Gastrocnemius medialis (tissue), 4 donors: ENCODE measurements at regions of chr7 and their contacts with region 1.

Region 1: DNA sequence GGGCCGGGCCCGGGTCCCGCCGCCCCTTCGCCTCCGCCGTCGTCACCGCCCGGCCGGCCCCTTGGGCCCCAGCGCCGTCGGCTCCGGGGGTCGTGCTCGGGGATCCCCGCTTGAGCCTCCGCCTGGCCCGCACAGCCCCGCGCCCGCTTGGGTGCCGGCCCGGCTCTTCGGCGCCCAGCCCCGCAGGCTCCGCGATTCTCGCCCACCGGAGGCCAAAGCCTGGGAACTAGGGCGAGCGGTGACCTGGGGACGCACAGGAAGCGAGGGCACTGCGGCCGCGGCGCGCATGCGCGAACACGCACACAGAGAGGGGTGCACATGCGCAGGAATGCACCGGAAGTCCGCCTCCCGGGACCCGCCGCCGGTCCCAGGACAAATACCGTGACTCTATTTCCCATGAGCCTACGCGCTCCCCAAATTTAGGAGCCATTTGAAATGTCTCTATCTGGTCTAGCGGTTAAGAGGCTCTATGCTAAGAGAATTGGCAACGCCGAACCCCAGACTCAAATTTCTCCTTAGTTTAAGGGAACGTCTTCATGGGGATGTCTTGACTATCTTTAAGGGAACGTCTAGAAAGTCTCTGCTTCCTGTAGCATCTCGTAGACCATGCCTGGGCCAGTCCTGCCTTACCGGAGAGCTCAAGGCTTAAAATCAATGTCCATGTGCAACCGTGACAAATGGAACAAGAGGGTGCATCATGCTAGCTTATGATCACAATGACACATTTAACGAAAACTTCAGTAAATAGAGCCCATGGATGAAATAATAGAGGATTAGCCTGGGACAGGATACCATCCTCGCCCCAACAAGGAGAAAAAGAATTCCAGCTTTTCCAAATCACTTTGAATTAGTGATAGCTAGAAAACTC is at the start of gene ZNF12:
- DNase-seq: peak; percentile 93 to 96
- ATAC-seq: peak; percentile 98
- H3K4me3 ChIP-seq: peak within 1 kb of the TSS; percentile 75 to 99 (median 88)
- H3K27ac ChIP-seq: peak within 1 kb of the TSS; percentile 80 to 90 (median 84)
- H3K4me1 ChIP-seq: peaks cover 22 to 23% of the 10 kb centered on the region in 2 donors
- H3K27me3 ChIP-seq: no peaks in the 10 kb centered on the region
- CTCF ChIP-seq: peak in 1 of 5 experiments; percentile 10
- POLR2A ChIP-seq: peak; percentile 63 to 81
- total RNA-seq, gene ZNF12: 4.5 to 8.9 (median 5.3) TPM

Region 2: GRCh38 chr7:6530626-6531491 is 176.1 kb before region 1 on chr7:
- in situ Hi-C with region 1: no loop called
- intact Hi-C with region 1: no loop called
- DNase-seq: no peak
- ATAC-seq: no peak
- H3K4me3 ChIP-seq: peak overlapping the region; percentile 28 to 49 (median 38)
- H3K27ac ChIP-seq: no peak overlapping the region
- H3K4me1 ChIP-seq: peaks cover 0 to 11% of the 10 kb centered on the region in 2 donors
- H3K27me3 ChIP-seq: peaks cover 32 to 57% (median 54%) of the 10 kb centered on the region in 3 donors
- CTCF ChIP-seq: no peak
- POLR2A ChIP-seq: no peak

Region 3: GRCh38 chr7:6577365-6578113 is 129.4 kb before region 1 on chr7 and contains the start of gene ZDHHC4:
- in situ Hi-C with region 1: no loop called
- intact Hi-C with region 1: loop called (anchors 10 kb)
- DNase-seq: peak; percentile 69 to 84
- ATAC-seq: peak; percentile 94 to 97
- H3K4me3 ChIP-seq: peak within 1 kb of the TSS; percentile 70 to 88 (median 77)
- H3K27ac ChIP-seq: peak within 1 kb of the TSS; percentile 85 to 95 (median 92)
- H3K4me1 ChIP-seq: peaks cover 0 to 5% of the 10 kb centered on the region in 2 donors
- H3K27me3 ChIP-seq: no peaks in the 10 kb centered on the region
- CTCF ChIP-seq: no peak
- POLR2A ChIP-seq: peak; percentile 87 to 92
- total RNA-seq, gene ZDHHC4: 52.7 to 88.6 (median 70.5) TPM

Region 4: DNA sequence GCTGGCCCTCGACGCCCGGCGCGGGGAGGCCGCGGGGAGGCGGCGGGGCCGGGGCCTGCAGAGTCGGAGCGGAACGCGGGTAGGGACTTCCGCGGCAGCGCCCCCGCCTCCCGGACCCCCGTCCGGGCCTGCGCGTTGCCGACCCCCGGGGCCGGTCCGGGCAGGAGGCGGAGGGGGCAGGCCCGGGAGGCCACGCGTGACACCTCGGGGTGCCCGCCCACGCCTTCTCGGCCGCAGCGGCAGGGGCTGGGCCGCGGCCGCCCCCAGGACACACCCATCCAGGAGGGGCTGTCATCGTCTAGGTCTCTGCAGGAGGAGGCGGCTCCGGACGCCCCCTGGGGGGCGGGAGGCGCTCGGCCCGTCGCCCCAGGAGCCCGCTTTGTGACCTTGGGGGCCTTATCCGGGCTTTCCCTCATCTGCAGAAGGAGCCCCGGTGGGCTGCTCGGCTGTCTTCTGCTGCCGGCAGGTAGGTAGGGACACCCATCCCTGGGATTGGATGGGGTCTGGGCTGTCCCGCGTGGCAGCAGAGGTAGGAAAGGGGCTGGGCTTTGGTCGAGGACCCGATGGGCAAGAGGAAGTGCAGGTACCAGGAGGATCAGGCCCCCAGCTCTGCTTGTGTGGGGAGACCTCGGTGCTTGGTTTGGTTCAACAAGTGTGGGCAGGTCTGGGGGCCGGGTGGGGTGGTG is 69.2 kb before region 1 on chr7:
- in situ Hi-C with region 1: no loop called
- intact Hi-C with region 1: loop called (anchors 2 kb)
- DNase-seq: no peak
- ATAC-seq: peak; percentile 12 to 21
- H3K4me3 ChIP-seq: peak overlapping the region; percentile 56 to 79 (median 62)
- H3K27ac ChIP-seq: peak overlapping the region; percentile 44 to 72 (median 58)
- H3K4me1 ChIP-seq: peaks cover 8 to 20% of the 10 kb centered on the region in 2 donors
- H3K27me3 ChIP-seq: no peaks in the 10 kb centered on the region
- CTCF ChIP-seq: no peak
- POLR2A ChIP-seq: no peak

Region 5: DNA sequence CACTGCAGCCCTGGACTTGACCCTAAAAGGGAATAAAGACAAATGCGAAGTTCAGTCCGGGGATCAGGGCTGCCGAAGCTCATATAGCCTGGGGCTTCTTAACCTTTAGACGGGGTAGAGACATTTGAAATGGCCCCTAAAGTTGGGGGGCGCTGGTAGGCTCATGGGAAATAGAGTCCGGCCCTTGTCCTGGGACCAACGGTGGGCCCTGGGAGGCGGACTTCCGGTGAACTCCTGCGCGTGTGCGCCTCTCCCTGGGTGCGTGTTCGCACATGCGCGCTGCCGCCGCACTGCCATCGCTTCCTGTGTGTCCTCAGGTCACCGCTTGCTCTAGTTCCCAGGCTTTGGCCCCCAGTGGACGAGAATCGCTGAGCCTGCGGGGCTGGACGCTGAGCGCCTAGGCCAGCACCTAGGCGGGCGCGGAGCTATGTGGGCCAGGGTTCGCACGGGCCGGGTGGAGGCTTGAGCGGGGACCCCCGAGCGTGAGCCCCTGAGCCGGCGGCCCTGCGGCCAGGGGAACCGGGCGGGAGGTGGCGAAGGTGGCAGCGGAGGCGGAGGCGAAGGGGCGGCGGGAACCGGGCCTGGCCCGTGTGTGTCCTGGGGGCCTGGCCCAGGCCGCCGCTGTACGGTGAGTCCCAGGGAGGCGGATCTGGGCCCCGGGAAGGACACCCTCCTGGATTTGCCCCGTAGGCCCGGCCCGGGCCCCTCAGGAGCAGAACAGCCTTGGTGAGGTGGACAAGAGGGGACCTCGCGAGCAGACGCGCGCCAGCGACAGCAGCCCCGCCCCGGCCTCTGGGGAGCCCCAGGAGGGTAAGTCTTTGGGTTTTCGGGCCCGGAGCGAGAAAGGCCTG is 22.8 kb after region 1 on chr7:
- in situ Hi-C with region 1: no loop called
- intact Hi-C with region 1: loop called (anchors 1 kb)
- DNase-seq: peak; percentile 75 to 92
- ATAC-seq: peak; percentile 99
- H3K4me3 ChIP-seq: peak overlapping the region; percentile 76 to 97 (median 86)
- H3K27ac ChIP-seq: peak overlapping the region; percentile 73 to 88 (median 87)
- H3K4me1 ChIP-seq: peaks cover 9 to 10% of the 10 kb centered on the region in 2 donors
- H3K27me3 ChIP-seq: no peaks in the 10 kb centered on the region
- CTCF ChIP-seq: peak in 1 of 5 experiments; percentile 22
- POLR2A ChIP-seq: peak; percentile 35 to 36

Region 6: DNA sequence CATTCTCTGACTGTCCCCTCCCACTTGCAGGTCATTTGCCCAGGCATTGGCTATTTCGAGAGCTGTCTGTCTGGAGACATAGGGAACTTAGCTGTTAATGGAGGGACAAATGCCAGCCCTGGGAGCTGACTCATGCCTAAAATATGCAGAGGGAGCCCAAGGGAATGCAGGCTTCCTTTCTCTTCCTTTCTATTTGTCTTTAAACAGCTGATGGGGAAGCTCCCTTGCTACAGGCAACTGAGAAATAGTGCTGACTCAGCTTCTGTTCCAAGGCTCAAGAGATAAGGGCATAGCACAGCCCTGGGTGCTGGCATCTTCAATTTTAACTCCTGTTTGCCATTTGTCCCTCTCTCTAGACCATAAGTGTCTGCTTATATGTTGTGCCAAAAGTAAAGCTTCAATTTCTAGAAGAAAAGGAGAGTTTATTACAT is 392.7 kb after region 1 on chr7:
- in situ Hi-C with region 1: no loop called
- intact Hi-C with region 1: no loop called
- DNase-seq: peak; percentile 39 to 64
- ATAC-seq: peak in 1 of 2 donors; percentile 77
- H3K4me3 ChIP-seq: no peak overlapping the region
- H3K27ac ChIP-seq: no peak overlapping the region
- H3K4me1 ChIP-seq: peaks cover 0 to 6% of the 10 kb centered on the region in 2 donors
- H3K27me3 ChIP-seq: no peaks in the 10 kb centered on the region
- CTCF ChIP-seq: no peak
- POLR2A ChIP-seq: no peak